HCT116 (cell line): ENCODE measurements at regions of chr1 and their contacts with region 1.

Region 1: DNA sequence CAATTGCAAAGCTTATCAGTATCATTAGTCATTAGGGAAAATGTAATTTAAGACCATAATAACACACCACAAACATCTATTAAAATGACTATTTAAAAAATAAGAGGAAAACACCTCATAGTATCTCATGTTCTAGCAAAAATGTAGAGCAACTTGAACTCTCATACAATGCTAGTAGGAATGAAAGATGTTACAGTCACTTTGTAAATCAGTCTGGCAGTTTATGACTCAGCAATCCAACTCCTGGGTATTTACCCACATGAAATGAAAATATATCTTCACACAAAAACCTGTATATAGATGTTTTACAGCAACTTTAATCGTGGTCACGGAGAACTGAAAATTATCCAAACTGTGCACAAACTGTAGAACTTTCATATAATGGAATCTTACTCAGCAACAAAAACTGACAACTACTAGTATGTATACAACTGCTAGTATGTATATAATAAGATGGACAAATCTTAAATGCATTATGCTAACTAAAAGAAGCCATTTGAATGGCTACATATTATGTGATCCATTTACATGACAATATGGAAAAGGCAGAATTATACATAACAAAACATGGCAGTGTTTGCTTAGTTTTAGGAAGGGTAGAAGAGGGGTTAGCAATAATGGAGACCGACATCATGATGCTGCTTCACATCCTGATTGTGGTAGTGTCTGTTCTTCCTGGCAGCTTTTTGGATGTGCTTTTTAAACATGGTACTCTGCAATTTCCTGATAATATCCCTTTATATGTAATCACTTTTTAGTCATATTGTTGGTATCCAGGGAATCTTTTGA is 267.0 kb downstream of the KCTD3 start:
- DNase-seq: no peak
- ATAC-seq: no peak
- H3K4me3 ChIP-seq: no peak overlapping the region
- H3K27ac ChIP-seq: no peak overlapping the region
- H3K4me1 ChIP-seq: no peaks in the 10 kb centered on the region
- H3K27me3 ChIP-seq: no peaks in the 10 kb centered on the region
- CTCF ChIP-seq: no peak
- POLR2A ChIP-seq: no peak
- RAD21 ChIP-seq: no peak

Region 2: GRCh38 chr1:215543191-215543606 is 290.9 kb before region 1 on chr1:
- CTCF ChIA-PET with region 1: no interaction called
- POLR2A ChIA-PET with region 1: no interaction called
- RAD21 ChIA-PET with region 1: no interaction called
- intact Hi-C with region 1: no loop called
- DNase-seq: no peak
- ATAC-seq: no peak
- H3K4me3 ChIP-seq: no peak overlapping the region
- H3K27ac ChIP-seq: no peak overlapping the region
- H3K4me1 ChIP-seq: no peaks in the 10 kb centered on the region
- H3K27me3 ChIP-seq: no peaks in the 10 kb centered on the region
- CTCF ChIP-seq: no peak
- POLR2A ChIP-seq: no peak
- RAD21 ChIP-seq: no peak

Region 3: GRCh38 chr1:215932558-215932957 is 98.4 kb after region 1 on chr1:
- CTCF ChIA-PET with region 1: no interaction called
- POLR2A ChIA-PET with region 1: no interaction called
- RAD21 ChIA-PET with region 1: no interaction called
- intact Hi-C with region 1: loop called (anchors 5 kb)
- DNase-seq: no peak
- ATAC-seq: no peak
- H3K4me3 ChIP-seq: no peak overlapping the region
- H3K27ac ChIP-seq: no peak overlapping the region
- H3K4me1 ChIP-seq: no peaks in the 10 kb centered on the region
- H3K27me3 ChIP-seq: no peaks in the 10 kb centered on the region
- CTCF ChIP-seq: no peak
- POLR2A ChIP-seq: no peak
- RAD21 ChIP-seq: no peak

Region 4: DNA sequence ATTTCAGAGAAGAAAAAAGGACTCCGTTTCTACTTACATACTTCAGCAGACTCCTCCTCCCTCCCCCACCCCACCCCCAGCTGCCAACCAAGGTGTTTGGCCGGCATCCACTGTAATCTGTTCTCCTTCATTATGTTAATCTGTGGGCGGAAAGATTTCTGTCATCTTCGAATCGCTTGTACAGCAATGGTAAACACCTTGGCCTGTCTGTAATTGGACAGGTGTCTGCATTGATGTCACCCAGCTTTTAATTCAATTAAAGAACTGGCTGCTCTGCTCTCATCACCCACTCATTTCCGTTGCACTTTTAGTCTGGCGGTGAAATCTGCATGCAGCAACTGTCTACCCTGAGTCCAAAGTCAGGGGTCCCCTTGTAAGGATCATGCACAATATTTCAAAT is 220.5 kb after region 1 on chr1:
- CTCF ChIA-PET with region 1: no interaction called
- POLR2A ChIA-PET with region 1: no interaction called
- RAD21 ChIA-PET with region 1: no interaction called
- intact Hi-C with region 1: no loop called
- DNase-seq: no peak
- ATAC-seq: no peak
- H3K4me3 ChIP-seq: no peak overlapping the region
- H3K27ac ChIP-seq: no peak overlapping the region
- H3K4me1 ChIP-seq: no peaks in the 10 kb centered on the region
- H3K27me3 ChIP-seq: no peaks in the 10 kb centered on the region
- CTCF ChIP-seq: no peak
- POLR2A ChIP-seq: no peak
- RAD21 ChIP-seq: no peak